ENCODE measurements at regions of chr4 and their contacts with region 1.

Region 1: GRCh38 chr4:1309261-1310010 is 19.7 kb downstream of the MAEA start:
- DNase-seq: peak; percentile 79
- H3K4me3 ChIP-seq: peak overlapping the region; percentile 2 to 38 (median 14)
- H3K27ac ChIP-seq: peak overlapping the region; percentile 64 to 76 (median 69)
- H3K4me1 ChIP-seq: peaks cover 11 to 54% (median 23%) of the 10 kb centered on the region in 4 donors
- H3K27me3 ChIP-seq: no peaks in the 10 kb centered on the region
- CTCF ChIP-seq: no peak
- EP300 ChIP-seq: no peak
- POLR2A ChIP-seq: no peak

Region 2: GRCh38 chr4:754221-755120 is 555.0 kb before region 1 on chr4:
- in situ Hi-C with region 1: no loop called
- intact Hi-C with region 1: loop called (anchors 5 kb)
- DNase-seq: no peak
- H3K4me3 ChIP-seq: no peak overlapping the region
- H3K27ac ChIP-seq: no peak overlapping the region
- H3K4me1 ChIP-seq: no peaks in the 10 kb centered on the region
- H3K27me3 ChIP-seq: no peaks in the 10 kb centered on the region
- CTCF ChIP-seq: no peak
- EP300 ChIP-seq: no peak
- POLR2A ChIP-seq: no peak

Region 3: DNA sequence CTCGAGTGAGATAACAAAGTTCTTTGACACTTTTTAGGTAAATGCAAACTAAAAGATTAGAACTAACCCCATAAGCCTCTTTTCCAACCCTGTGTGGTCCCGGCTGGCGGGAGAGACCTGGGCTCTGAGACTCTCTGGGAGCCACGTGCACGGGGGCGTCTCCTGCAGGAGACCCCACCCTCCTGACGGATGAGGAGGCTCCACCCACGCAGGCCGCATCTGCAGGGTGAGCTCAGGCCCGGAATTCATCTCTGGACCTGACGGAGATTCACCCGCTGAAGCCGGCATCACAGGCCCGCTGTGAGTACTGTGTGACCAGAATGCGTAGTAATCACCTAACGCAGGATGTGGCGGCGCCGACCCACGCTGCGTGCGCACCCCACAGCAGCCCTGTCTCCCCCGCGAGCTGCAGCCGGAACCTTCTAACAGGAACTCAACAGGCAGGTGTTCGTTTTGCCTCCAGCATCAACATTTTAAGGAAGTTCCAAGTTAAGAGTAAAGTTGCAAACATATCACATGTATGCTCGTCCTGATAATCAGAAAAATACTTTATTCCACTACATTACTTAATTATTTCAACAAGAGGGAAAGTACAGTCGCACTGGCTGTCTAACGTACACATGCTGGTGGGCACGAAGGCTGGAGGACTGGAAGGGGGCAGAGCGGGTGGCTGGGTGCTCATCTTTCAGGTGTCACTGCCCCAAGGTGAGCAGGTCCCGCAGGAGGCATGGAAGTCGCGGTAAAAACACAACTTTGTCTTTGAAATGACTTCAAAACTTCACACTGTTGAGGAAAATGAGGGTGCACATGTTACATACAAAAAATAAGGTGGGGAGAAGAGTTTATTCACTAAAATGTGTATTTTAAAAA is 253.5 kb before region 1 on chr4:
- in situ Hi-C with region 1: no loop called
- intact Hi-C with region 1: no loop called
- DNase-seq: peak; percentile 63
- H3K4me3 ChIP-seq: peak overlapping the region in 1 of 4 donors; percentile 13
- H3K27ac ChIP-seq: peak overlapping the region in 2 of 4 donors; percentile 1 to 21
- H3K4me1 ChIP-seq: peaks cover 0 to 17% (median 5%) of the 10 kb centered on the region in 4 donors
- H3K27me3 ChIP-seq: peaks cover 56% of the 10 kb centered on the region
- CTCF ChIP-seq: no peak
- EP300 ChIP-seq: no peak
- POLR2A ChIP-seq: peak; percentile 53

Region 4: DNA sequence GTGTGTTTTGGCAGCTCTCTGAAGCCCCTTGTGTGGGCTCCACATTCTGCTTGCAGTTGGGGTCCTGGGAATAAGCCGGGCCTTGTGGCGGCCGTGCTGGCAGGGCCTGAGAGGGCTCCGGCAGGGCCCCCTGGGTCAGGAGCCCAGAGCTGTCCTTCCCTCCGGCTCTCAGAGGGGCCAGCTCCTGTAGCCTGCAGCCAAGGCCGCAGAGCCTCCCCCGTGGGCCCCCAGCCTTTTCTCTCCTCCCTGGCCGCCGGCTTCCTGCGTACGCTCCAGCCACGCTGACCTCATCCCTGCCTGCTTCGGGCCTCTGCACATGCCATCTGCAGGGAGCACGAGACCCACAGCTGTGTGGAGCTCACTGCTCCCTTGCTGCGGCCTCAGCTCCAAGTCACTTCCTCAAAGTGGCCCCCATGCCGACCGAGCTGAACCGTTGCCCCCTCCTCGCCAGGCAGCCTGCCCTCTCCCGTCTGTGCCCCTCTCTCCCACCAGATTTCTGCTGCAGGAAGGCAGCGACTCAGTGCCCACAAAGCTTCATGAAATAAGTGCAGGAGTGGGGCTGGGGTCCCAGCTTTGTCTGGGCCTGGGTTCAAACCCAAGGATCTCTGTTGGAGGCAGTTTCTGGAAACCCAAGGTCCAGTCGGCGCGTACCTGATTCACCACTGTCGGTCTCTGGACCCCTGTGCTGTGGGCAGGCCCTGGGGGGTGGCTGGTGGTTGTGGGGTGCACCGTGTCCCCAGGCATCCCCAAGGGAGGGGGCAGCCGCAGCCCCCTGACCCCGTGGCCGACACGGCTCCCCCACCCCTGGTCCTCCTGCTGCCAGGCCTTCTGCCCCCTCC is 153.9 kb after region 1 on chr4:
- in situ Hi-C with region 1: no loop called
- intact Hi-C with region 1: no loop called
- DNase-seq: no peak
- H3K4me3 ChIP-seq: no peak overlapping the region
- H3K27ac ChIP-seq: no peak overlapping the region
- H3K4me1 ChIP-seq: no peaks in the 10 kb centered on the region
- H3K27me3 ChIP-seq: peaks cover 56% of the 10 kb centered on the region
- CTCF ChIP-seq: no peak
- EP300 ChIP-seq: no peak
- POLR2A ChIP-seq: no peak

Region 5: DNA sequence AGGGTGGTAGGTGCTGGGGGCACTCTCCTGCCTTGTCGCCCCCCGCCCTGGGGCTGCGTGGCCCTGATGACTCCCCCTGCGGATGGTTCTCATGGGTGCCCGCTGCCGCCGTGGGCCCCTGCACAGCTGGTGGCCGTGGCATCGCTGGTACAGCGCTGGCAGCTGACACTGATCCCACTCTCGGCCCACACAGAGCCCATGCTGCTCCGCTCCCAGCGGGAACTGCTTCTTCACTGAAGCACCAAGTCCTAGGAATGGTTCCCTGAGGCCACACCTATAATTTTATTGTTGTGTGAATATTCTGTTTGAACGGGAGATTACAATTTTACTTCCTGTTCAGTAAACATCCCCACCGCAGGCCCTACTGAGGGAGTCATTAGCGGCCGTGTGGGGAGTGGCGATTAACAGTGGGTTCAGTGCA is 235.4 kb after region 1 on chr4:
- in situ Hi-C with region 1: no loop called
- intact Hi-C with region 1: no loop called
- DNase-seq: peak; percentile 61
- H3K4me3 ChIP-seq: no peak overlapping the region
- H3K27ac ChIP-seq: peak overlapping the region in 3 of 4 donors; percentile 10 to 45 (median 28)
- H3K4me1 ChIP-seq: peaks cover 3 to 20% (median 18%) of the 10 kb centered on the region in 4 donors
- H3K27me3 ChIP-seq: peaks cover 33% of the 10 kb centered on the region
- CTCF ChIP-seq: no peak
- EP300 ChIP-seq: no peak
- POLR2A ChIP-seq: peak; percentile 26